ENCODE measurements at regions of chrX and their contacts with region 1.

Region 1: GRCh38 chrX:135477576-135477975 is 42.9 kb upstream of the INTS6L start:
- DNase-seq: peak; percentile 78
- H3K4me3 Mint-ChIP-seq: no peak overlapping the region
- H3K27ac Mint-ChIP-seq: no peak overlapping the region
- H3K4me1 Mint-ChIP-seq: peaks cover 2% of the 10 kb centered on the region
- H3K27me3 Mint-ChIP-seq: peaks cover 14% of the 10 kb centered on the region

Region 2: GRCh38 chrX:135185795-135186443 is 291.7 kb before region 1 on chrX:
- intact Hi-C with region 1: loop called (anchors 1 kb)
- DNase-seq: peak; percentile 80
- H3K4me3 Mint-ChIP-seq: no peak overlapping the region
- H3K27ac Mint-ChIP-seq: no peak overlapping the region
- H3K4me1 Mint-ChIP-seq: no peaks in the 10 kb centered on the region
- H3K27me3 Mint-ChIP-seq: peaks cover 30% of the 10 kb centered on the region

Region 3: DNA sequence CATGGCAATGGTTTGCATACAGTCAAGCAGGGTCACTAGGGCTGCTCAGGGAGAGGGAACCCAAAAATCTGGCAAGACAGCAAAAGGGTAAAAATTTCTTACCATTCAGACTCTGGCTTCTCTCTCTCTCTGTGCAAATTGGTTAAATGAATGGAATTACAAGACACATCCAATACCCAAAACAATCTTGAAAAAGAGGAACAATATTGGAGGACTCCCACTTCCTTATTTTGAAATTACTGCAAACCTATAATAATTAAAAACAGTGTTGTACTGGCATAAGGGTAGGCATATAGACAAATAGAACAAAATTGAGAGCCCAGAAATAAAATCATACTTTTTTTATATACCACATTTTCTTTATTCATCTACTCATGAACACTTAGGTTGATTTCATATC is 201.6 kb before region 1 on chrX:
- intact Hi-C with region 1: no loop called
- DNase-seq: no peak
- H3K4me3 Mint-ChIP-seq: no peak overlapping the region
- H3K27ac Mint-ChIP-seq: no peak overlapping the region
- H3K4me1 Mint-ChIP-seq: peaks cover 3% of the 10 kb centered on the region
- H3K27me3 Mint-ChIP-seq: no peaks in the 10 kb centered on the region

Measured in activated CD4-positive, alpha-beta T cell treated with anti-CD3 and anti-CD28 coated beads, Interleukin-2, amount 10 ng/mL, durations not matched to agents 24 days and 14 days (primary cell).